HAP-1 (cell line): ENCODE measurements at regions of chr3 and their contacts with region 1.

Region 1: GRCh38 chr3:122942937-122943827 is 84.4 kb downstream of the SEMA5B start:
- DNase-seq: peak; percentile 41 to 84
- H3K4me3 ChIP-seq: no peak overlapping the region
- H3K4me1 ChIP-seq: no peaks in the 10 kb centered on the region
- H3K27me3 ChIP-seq: no peaks in the 10 kb centered on the region

Region 2: GRCh38 chr3:122824465-122825381 is 118.5 kb before region 1 on chr3:
- in situ Hi-C with region 1: no loop called
- DNase-seq: no peak
- H3K4me3 ChIP-seq: no peak overlapping the region
- H3K4me1 ChIP-seq: no peaks in the 10 kb centered on the region
- H3K27me3 ChIP-seq: no peaks in the 10 kb centered on the region

Region 3: GRCh38 chr3:123258811-123259420 is 315.7 kb after region 1 on chr3:
- in situ Hi-C with region 1: loop called (anchors 25 kb)
- DNase-seq: peak in 1 of 2 experiments; percentile 60
- H3K4me3 ChIP-seq: no peak overlapping the region
- H3K4me1 ChIP-seq: no peaks in the 10 kb centered on the region
- H3K27me3 ChIP-seq: no peaks in the 10 kb centered on the region